Activated T-helper 2 cell treated with anti-CD3 and anti-CD28 coated beads, Interferon-gamma antibody, Interleukin-2, Interleukin-4, amounts not matched to agents 10 μg/mL and 5 μg/mL and 100 μg/mL, durations not matched to agents 14 hours and 24 hours and 36 hours (primary cell): ENCODE measurements at regions of chr3 and their contacts with region 1.

Region 1: GRCh38 chr3:161274719-161275298 is 53.7 kb downstream of the NMD3 start:
- DNase-seq: peak; percentile 14
- H3K4me3 Mint-ChIP-seq: no peak overlapping the region
- H3K27ac Mint-ChIP-seq: no peak overlapping the region
- H3K4me1 Mint-ChIP-seq: no peaks in the 10 kb centered on the region
- H3K27me3 Mint-ChIP-seq: no peaks in the 10 kb centered on the region

Region 2: GRCh38 chr3:160707187-160707794 is 567.5 kb before region 1 on chr3:
- intact Hi-C with region 1: loop called (anchors 5 kb)
- DNase-seq: no peak
- H3K4me3 Mint-ChIP-seq: no peak overlapping the region
- H3K27ac Mint-ChIP-seq: no peak overlapping the region
- H3K4me1 Mint-ChIP-seq: no peaks in the 10 kb centered on the region
- H3K27me3 Mint-ChIP-seq: peaks cover 33% of the 10 kb centered on the region

Region 3: GRCh38 chr3:160956806-160957205 is 318.0 kb before region 1 on chr3:
- intact Hi-C with region 1: loop called (anchors 2 kb)
- DNase-seq: no peak
- H3K4me3 Mint-ChIP-seq: no peak overlapping the region
- H3K27ac Mint-ChIP-seq: no peak overlapping the region
- H3K4me1 Mint-ChIP-seq: no peaks in the 10 kb centered on the region
- H3K27me3 Mint-ChIP-seq: peaks cover 4% of the 10 kb centered on the region

Region 4: GRCh38 chr3:161096771-161097355 is 177.9 kb before region 1 on chr3:
- intact Hi-C with region 1: loop called (anchors 5 kb)
- DNase-seq: no peak
- H3K4me3 Mint-ChIP-seq: no peak overlapping the region
- H3K27ac Mint-ChIP-seq: no peak overlapping the region
- H3K4me1 Mint-ChIP-seq: no peaks in the 10 kb centered on the region
- H3K27me3 Mint-ChIP-seq: peaks cover 9% of the 10 kb centered on the region

Region 5: DNA sequence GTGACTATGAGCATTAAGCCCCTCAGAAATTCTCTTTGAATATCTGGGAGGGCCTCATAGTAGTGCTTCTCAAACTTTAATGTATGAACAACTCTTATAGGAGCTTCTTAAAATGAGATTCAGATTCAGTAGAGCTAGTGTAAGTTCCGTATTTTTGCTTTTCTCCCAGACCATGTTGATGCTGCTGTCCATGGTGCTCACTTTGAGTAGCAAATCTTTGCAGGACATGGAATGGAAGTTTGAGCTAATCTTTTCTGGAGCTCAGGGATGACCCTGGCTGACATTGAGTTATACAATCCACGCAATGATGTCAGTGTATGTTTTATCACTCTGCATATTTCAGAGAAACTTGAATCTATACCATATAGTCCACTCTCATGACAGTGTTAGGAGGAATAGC is 356.0 kb after region 1 on chr3:
- intact Hi-C with region 1: no loop called
- DNase-seq: no peak
- H3K4me3 Mint-ChIP-seq: no peak overlapping the region
- H3K27ac Mint-ChIP-seq: no peak overlapping the region
- H3K4me1 Mint-ChIP-seq: no peaks in the 10 kb centered on the region
- H3K27me3 Mint-ChIP-seq: no peaks in the 10 kb centered on the region